ENCODE measurements at regions of chr10 and their contacts with region 1.

Region 1: GRCh38 chr10:25113191-25114035 is 61.4 kb upstream of the GPR158 start:
- DNase-seq: peak; percentile 77
- ATAC-seq: peak; percentile 91 to 92

Region 2: GRCh38 chr10:25226775-25227682 is 113.6 kb after region 1 on chr10:
- intact Hi-C with region 1: loop called in 1 of 2 experiments (anchors 10 kb)
- DNase-seq: no peak
- ATAC-seq: peak in 1 of 2 donors; percentile 35

Region 3: GRCh38 chr10:25682203-25682851 is 568.9 kb after region 1 on chr10:
- intact Hi-C with region 1: loop called (anchors 2 to 10 kb)
- DNase-seq: peak; percentile 31
- ATAC-seq: peak; percentile 92 to 93

Region 4: DNA sequence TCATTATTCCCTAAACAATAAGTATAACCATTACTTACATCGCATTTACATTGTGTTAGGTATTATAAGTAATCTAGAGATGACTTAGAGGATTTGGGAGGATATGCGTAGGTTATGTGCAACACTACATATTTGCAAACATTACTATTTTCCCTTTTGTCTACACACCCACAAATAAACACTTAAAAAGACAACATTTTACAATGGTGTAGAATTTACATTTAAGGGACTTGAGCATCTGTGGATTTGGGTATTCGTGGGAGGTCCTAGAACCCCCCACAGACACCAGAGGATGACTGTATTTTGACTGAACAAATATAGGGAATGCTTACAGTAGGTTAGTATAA is 600.5 kb after region 1 on chr10:
- intact Hi-C with region 1: loop called in 1 of 2 experiments (anchors 10 kb)
- DNase-seq: no peak
- ATAC-seq: no peak